HCT116 (cell line): ENCODE measurements at regions of chr5 and their contacts with region 1.

Region 1: DNA sequence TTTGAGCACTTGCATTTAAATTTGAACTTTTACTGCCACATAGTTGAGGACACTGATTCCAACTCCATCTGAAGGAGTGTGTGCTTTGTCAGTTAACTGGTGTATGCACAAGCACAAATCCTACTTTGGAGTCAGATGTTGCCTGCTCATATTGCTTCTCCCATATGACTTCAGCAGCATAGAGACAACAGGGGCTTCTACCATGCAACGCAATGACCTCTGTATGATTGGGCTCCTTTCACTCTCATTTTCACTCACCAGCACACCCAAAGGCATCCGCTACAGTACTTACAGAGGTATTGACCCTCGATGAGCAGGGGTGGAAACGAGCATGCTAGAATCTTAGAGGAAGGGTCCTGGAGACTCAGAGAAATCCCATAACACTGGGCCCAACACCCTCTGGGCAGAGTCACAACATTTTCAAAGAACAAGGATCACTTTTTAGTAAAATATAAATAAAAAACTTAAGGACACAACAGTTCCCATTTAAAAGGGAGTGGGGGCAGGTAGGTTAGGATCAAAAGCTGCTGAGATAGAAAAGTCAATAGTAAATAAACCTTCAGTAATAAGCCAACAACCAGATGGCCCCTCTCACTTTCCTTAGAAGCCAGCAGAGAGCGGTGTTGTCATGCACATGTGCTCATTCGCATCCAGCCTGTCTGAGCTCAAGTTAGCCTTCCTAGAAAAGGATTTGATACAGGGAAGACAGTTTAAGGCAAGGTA is 203.8 kb downstream of the SNCAIP start:
- DNase-seq: peak; percentile 71
- ATAC-seq: peak; percentile 94
- H3K4me3 ChIP-seq: no peak overlapping the region
- H3K27ac ChIP-seq: no peak overlapping the region
- H3K4me1 ChIP-seq: no peaks in the 10 kb centered on the region
- H3K27me3 ChIP-seq: no peaks in the 10 kb centered on the region
- CTCF ChIP-seq: peak; percentile 74 to 83 (median 75)
- POLR2A ChIP-seq: no peak
- RAD21 ChIP-seq: peak; percentile 93

Region 2: DNA sequence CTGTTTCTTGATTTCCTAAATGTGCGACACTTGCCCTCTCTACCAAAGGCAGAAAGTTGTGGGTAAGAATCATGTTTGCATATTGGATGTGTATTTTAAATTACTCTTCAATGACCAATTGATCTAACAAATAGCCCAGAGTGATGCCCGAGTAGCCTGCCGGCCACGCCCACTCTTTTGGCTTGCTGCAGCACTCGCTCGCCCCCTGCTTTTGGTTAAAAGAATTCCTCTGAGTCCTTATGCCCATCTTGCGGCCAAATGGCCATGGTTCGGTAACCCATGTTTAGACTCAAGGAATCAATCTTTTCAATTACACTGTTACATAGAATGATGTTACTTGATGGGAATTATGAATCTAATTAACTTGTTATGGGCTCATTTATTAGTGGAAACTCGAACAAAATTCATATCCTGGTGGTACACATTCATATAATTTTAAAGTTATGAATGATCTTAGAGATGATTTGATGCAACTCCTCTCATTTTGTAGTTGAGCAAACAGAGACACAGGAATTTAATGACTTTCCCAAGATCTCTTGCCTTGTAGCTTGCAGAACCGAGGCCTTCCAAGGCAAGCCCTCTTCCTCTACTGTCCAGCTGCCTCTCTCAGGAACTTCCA is 484.2 kb after region 1 on chr5:
- CTCF ChIA-PET with region 1: no interaction called
- POLR2A ChIA-PET with region 1: no interaction called
- RAD21 ChIA-PET with region 1: no interaction called
- intact Hi-C with region 1: loop called (anchors 1 kb)
- DNase-seq: peak; percentile 36
- ATAC-seq: peak; percentile 87
- H3K4me3 ChIP-seq: no peak overlapping the region
- H3K27ac ChIP-seq: no peak overlapping the region
- H3K4me1 ChIP-seq: no peaks in the 10 kb centered on the region
- H3K27me3 ChIP-seq: no peaks in the 10 kb centered on the region
- CTCF ChIP-seq: peak; percentile 54 to 77 (median 73); a peak in 5 of 6 replicates
- POLR2A ChIP-seq: no peak
- RAD21 ChIP-seq: peak; percentile 78

Region 3: GRCh38 chr5:123215933-123216702 is 700.2 kb after region 1 on chr5:
- CTCF ChIA-PET with region 1: interaction called, 7 read pairs
- POLR2A ChIA-PET with region 1: no interaction called
- RAD21 ChIA-PET with region 1: no interaction called
- intact Hi-C with region 1: loop called (anchors 5 kb)
- DNase-seq: peak; percentile 18
- ATAC-seq: 0 out of 2 replicates have a peak, but pooled peaks have one; percentile 47
- H3K4me3 ChIP-seq: no peak overlapping the region
- H3K27ac ChIP-seq: no peak overlapping the region
- H3K4me1 ChIP-seq: no peaks in the 10 kb centered on the region
- H3K27me3 ChIP-seq: no peaks in the 10 kb centered on the region
- CTCF ChIP-seq: peak in 2 of 3 experiments; percentile 31 to 35; a peak in 3 of 6 replicates
- POLR2A ChIP-seq: no peak
- RAD21 ChIP-seq: peak; percentile 60

Region 4: GRCh38 chr5:123423278-123424149 is 907.6 kb after region 1 on chr5 and contains the start of gene CEP120:
- CTCF ChIA-PET with region 1: interaction called, 18 read pairs
- POLR2A ChIA-PET with region 1: no interaction called
- RAD21 ChIA-PET with region 1: interaction called in 1 of 2 experiments, 3 read pairs
- intact Hi-C with region 1: no loop called
- DNase-seq: peak; percentile 99
- ATAC-seq: peak; percentile 98
- H3K4me3 ChIP-seq: peak within 1 kb of the TSS; percentile 89 to 93
- H3K27ac ChIP-seq: peak within 1 kb of the TSS; percentile 53
- H3K4me1 ChIP-seq: peaks cover 4 to 16% of the 10 kb centered on the region in 2 experiments; a peak in 3 of 4 replicates
- H3K27me3 ChIP-seq: no peaks in the 10 kb centered on the region
- CTCF ChIP-seq: peak; percentile 60 to 76 (median 71)
- POLR2A ChIP-seq: peak; percentile 80
- RAD21 ChIP-seq: peak; percentile 69
- total RNA-seq, gene CEP120: 30.2 TPM

Region 5: GRCh38 chr5:123665822-123666371 is 1150.0 kb after region 1 on chr5:
- CTCF ChIA-PET with region 1: interaction called, 3 read pairs
- POLR2A ChIA-PET with region 1: no interaction called
- RAD21 ChIA-PET with region 1: no interaction called
- intact Hi-C with region 1: loop called (anchors 5 kb)
- DNase-seq: peak; percentile 13
- ATAC-seq: peak; percentile 71
- H3K4me3 ChIP-seq: no peak overlapping the region
- H3K27ac ChIP-seq: no peak overlapping the region
- H3K4me1 ChIP-seq: no peaks in the 10 kb centered on the region
- H3K27me3 ChIP-seq: no peaks in the 10 kb centered on the region
- CTCF ChIP-seq: peak; percentile 17 to 51 (median 28); a peak in 4 of 6 replicates
- POLR2A ChIP-seq: no peak
- RAD21 ChIP-seq: peak; percentile 51